H1 (cell line): ENCODE measurements at regions of chr11 and their contacts with region 1.

Region 1: GRCh38 chr11:129946256-129946655 is 50.9 kb upstream of the NFRKB start:
- DNase-seq: no peak
- H3K4me3 ChIP-seq: no peak overlapping the region
- H3K27ac ChIP-seq: no peak overlapping the region
- H3K4me1 ChIP-seq: no peaks in the 10 kb centered on the region; a peak in 1 of 7 replicates
- H3K27me3 ChIP-seq: no peaks in the 10 kb centered on the region
- CTCF ChIP-seq: no peak
- EP300 ChIP-seq: no peak
- POLR2A ChIP-seq: no peak
- RAD21 ChIP-seq: no peak

Region 2: DNA sequence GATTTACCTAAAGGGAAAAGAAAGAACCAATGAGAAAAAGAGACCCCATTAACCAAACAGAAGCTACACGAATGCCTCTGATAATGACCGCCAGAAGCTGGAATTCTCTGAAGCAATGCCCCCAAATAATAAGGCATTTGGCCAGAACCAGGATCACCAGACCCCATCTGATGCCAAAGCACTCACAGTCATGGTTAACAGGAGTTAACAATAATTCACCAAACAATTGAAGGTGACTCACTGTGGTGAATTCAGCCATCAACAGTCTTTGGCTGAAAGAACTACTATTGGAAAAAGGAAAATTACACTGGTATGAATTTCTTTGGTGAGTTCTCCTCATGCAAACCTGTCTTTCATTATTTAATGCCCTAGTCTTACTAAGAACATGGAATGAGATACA is 29.0 kb before region 1 on chr11:
- CTCF ChIA-PET with region 1: interaction called, 11 read pairs
- POLR2A ChIA-PET with region 1: no interaction called
- DNase-seq: no peak
- H3K4me3 ChIP-seq: no peak overlapping the region
- H3K27ac ChIP-seq: no peak overlapping the region
- H3K4me1 ChIP-seq: no peaks in the 10 kb centered on the region
- H3K27me3 ChIP-seq: no peaks in the 10 kb centered on the region
- CTCF ChIP-seq: no peak
- EP300 ChIP-seq: no peak
- POLR2A ChIP-seq: no peak
- RAD21 ChIP-seq: no peak

Region 3: DNA sequence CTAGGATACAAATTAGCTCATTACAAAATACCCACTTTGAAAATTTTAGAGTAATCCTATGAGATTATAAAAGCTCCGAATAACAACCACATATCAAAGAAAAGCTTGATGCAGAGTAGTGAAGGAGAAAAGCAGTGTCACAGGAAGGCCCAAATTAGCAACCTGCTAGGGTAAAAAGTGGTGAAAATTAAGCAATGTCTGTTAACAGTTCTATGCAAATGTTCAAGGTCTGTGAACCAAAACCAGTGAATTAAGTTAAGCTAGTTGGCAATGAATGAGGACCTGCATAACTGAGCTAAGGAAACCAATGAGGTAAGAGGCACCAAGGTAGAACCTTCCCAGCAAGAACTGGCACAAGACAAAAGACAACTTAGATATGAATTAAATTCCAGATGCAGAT is 26.8 kb after region 1 on chr11:
- CTCF ChIA-PET with region 1: interaction called, 14 read pairs
- POLR2A ChIA-PET with region 1: interaction called, 4 read pairs
- DNase-seq: no peak
- H3K4me3 ChIP-seq: no peak overlapping the region
- H3K27ac ChIP-seq: no peak overlapping the region
- H3K4me1 ChIP-seq: no peaks in the 10 kb centered on the region; a peak in 1 of 7 replicates
- H3K27me3 ChIP-seq: no peaks in the 10 kb centered on the region
- CTCF ChIP-seq: no peak
- EP300 ChIP-seq: no peak
- POLR2A ChIP-seq: no peak
- RAD21 ChIP-seq: no peak